GM12878 (cell line): ENCODE measurements at regions of chr17 and their contacts with region 1.

Region 1: GRCh38 chr17:57868007-57868909 is 18.4 kb upstream of the MRPS23 start:
- DNase-seq: peak; percentile 47
- ATAC-seq: peak; percentile 93
- H3K4me3 ChIP-seq: no peak overlapping the region
- H3K27ac ChIP-seq: no peak overlapping the region; the same call in 1 of the 2 replicates
- H3K4me1 ChIP-seq: peaks cover 20% of the 10 kb centered on the region
- H3K27me3 ChIP-seq: no peaks in the 10 kb centered on the region; a peak in 1 of 4 replicates
- CTCF ChIP-seq: peak; percentile 7 to 32 (median 32); a peak in 3 of 6 replicates
- EP300 ChIP-seq: no peak
- POLR2A ChIP-seq: no peak
- RAD21 ChIP-seq: no peak

Region 2: DNA sequence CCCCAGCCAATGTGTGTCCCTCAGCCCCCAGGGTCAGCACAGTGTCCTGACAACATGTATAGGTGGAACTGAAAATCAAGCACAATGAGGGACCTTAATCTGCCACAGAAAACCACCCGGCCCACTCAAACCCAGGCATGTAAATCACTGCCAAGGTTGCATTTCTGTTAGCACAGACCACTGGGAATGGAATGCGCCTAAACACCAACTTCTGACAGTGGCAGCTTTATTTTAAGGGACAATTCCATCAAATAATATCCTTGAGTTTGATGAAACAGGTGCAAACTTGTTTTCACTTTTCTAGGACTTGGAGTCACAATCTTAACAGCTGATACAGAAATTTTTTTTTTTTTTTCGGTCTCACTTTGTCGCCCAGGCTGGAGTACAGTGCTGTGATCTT is 18.9 kb after region 1 on chr17:
- CTCF ChIA-PET with region 1: interaction called, 4 read pairs
- POLR2A ChIA-PET with region 1: interaction called, 10 read pairs
- RAD21 ChIA-PET with region 1: no interaction called
- SMC1A ChIA-PET with region 1: no interaction called
- in situ Hi-C with region 1: no loop called
- intact Hi-C with region 1: no loop called
- DNase-seq: no peak
- ATAC-seq: no peak
- H3K4me3 ChIP-seq: no peak overlapping the region
- H3K27ac ChIP-seq: no peak overlapping the region
- H3K4me1 ChIP-seq: no peaks in the 10 kb centered on the region
- H3K27me3 ChIP-seq: no peaks in the 10 kb centered on the region
- CTCF ChIP-seq: no peak
- EP300 ChIP-seq: no peak
- POLR2A ChIP-seq: no peak
- RAD21 ChIP-seq: no peak